ENCODE measurements at regions of chr13 and their contacts with region 1.

Region 1: GRCh38 chr13:29260683-29261082 is 334.8 kb downstream of the SLC7A1 start:
- DNase-seq: peak in 1 of 14 experiments; percentile 3
- ATAC-seq: no peak
- H3K4me3 ChIP-seq: no peak overlapping the region
- H3K4me3 Mint-ChIP-seq: no peak overlapping the region
- H3K27ac ChIP-seq: no peak overlapping the region
- H3K27ac Mint-ChIP-seq: no peak overlapping the region
- H3K4me1 ChIP-seq: no peaks in the 10 kb centered on the region
- H3K4me1 Mint-ChIP-seq: no peaks in the 10 kb centered on the region
- H3K27me3 ChIP-seq: no peaks in the 10 kb centered on the region
- H3K27me3 Mint-ChIP-seq: peaks cover 10% of the 10 kb centered on the region
- CTCF ChIP-seq: no peak

Region 2: DNA sequence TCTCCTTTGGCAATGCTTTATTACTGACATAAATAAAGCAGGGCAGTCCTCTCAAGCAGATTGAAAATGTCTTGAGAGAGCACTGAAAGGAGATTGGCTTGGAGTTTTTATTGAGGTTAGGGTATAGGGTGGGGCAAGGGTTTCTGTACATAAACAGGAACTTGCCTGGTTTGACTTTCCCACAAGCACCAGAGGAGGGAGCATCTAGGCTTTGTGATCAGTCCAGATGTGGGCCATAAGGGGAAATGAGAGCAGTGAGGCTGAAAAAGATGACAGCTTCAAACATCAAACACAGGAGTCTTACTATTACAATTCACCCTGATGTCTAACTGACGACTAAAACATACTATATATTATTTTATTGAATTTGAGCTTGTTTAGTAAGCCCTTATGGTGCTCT is 179.6 kb before region 1 on chr13:
- CTCF ChIA-PET with region 1: no interaction called
- POLR2A ChIA-PET with region 1: no interaction called
- intact Hi-C with region 1: loop called in 1 of 2 experiments (anchors 10 kb)
- DNase-seq: peak in 9 of 14 experiments; percentile 1 to 78 (median 27)
- ATAC-seq: peak; percentile 83
- H3K4me3 ChIP-seq: no peak overlapping the region
- H3K4me3 Mint-ChIP-seq: no peak overlapping the region
- H3K27ac ChIP-seq: peak overlapping the region in 1 of 2 donors; percentile 34
- H3K27ac Mint-ChIP-seq: peak overlapping the region; percentile 50
- H3K4me1 ChIP-seq: peaks cover 15% of the 10 kb centered on the region
- H3K4me1 Mint-ChIP-seq: peaks cover 38% of the 10 kb centered on the region
- H3K27me3 ChIP-seq: no peaks in the 10 kb centered on the region
- H3K27me3 Mint-ChIP-seq: no peaks in the 10 kb centered on the region
- CTCF ChIP-seq: no peak

Region 3: DNA sequence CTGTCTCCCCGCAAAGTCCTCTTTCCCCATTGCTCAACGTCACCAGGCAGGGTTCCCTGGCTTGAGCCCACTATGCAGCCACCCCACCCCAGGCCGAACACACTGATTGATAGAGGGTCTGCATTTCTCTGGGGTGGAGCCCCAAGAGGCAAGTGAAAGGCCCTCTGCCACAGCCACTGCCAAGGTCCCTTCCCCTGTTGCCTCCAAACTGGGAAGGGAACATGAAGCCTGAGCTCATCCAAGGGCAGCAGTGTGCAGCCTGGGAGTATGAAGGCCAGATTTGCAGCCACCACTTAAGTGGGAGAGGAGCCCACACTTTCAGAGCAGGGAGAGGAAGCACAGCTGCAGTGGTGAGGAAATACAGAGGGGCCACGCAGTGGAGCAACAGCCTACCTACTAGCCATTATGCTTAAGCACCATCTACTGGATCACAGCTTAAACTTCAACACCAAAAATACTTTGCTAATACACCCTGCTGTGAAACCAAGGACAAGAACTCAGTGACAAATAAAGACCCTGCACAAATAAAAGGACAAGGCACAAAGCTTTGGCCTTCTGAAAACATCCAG is 541.1 kb after region 1 on chr13:
- CTCF ChIA-PET with region 1: no interaction called
- POLR2A ChIA-PET with region 1: no interaction called
- intact Hi-C with region 1: no loop called
- DNase-seq: no peak
- ATAC-seq: no peak
- H3K4me3 ChIP-seq: no peak overlapping the region
- H3K4me3 Mint-ChIP-seq: no peak overlapping the region
- H3K27ac ChIP-seq: no peak overlapping the region
- H3K27ac Mint-ChIP-seq: no peak overlapping the region
- H3K4me1 ChIP-seq: peaks cover 11% of the 10 kb centered on the region
- H3K4me1 Mint-ChIP-seq: peaks cover 44% of the 10 kb centered on the region
- H3K27me3 ChIP-seq: no peaks in the 10 kb centered on the region
- H3K27me3 Mint-ChIP-seq: no peaks in the 10 kb centered on the region
- CTCF ChIP-seq: no peak